MCF 10A (cell line): ENCODE measurements at regions of chr9 and their contacts with region 1.

Region 1: GRCh38 chr9:83980395-83981125 is at the start of gene RMI1:
- DNase-seq: peak; percentile 99
- H3K4me3 Mint-ChIP-seq: peak within 1 kb of the TSS; percentile 100
- H3K27ac Mint-ChIP-seq: peak within 1 kb of the TSS; percentile 100
- H3K4me1 Mint-ChIP-seq: peaks cover 25% of the 10 kb centered on the region
- H3K27me3 Mint-ChIP-seq: no peaks in the 10 kb centered on the region
- CTCF ChIP-seq: no peak
- total RNA-seq, gene RMI1: 6.9 and 11.0 TPM in 2 replicates

Region 2: DNA sequence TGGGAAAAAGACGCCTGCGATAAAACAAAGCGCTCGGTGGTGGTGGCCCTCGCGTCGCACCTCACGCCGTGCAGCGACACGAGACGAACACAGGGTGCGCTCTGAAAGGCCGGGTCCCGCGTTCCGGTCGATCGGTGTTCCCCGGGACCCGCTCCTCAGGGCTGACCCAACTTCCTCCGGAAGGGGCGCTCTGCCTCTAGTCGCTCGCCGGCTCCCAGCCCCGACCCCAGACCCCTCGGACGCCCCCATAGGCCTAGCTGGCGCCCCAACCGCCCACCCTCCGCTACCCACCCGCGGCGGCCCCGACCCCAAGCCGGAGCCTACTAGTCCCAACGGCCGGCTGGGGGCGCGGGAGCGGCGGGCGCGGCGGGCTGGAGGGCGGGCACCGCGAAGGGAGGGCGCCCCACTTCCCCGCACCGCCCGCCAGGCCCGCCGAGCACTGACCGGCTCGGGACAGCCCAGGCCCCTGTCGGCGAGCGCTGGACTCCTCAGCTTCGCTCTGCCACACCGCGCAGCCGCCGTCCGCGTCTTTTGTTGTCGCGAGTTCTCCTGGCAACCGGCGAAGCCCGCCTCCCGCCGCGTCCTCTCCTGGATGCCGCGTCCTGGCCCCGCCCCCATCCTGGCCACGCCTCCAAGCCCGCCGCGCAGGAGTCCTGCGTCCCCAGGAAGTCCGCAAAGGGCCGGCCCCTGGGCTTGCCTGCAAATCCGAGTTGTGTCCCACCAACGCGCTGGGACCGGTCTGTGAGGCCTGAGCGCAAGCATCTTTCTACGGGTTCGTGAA is 59.4 kb before region 1 on chr9 and contains the start of gene KIF27:
- CTCF ChIA-PET with region 1: interaction called, 6 read pairs
- POLR2A ChIA-PET with region 1: interaction called, 28 read pairs
- intact Hi-C with region 1: loop called (anchors 2 kb)
- DNase-seq: peak; percentile 96
- H3K4me3 Mint-ChIP-seq: peak within 1 kb of the TSS; percentile 77
- H3K27ac Mint-ChIP-seq: peak within 1 kb of the TSS; percentile 92
- H3K4me1 Mint-ChIP-seq: peaks cover 10% of the 10 kb centered on the region
- H3K27me3 Mint-ChIP-seq: no peaks in the 10 kb centered on the region
- CTCF ChIP-seq: peak; percentile 11
- total RNA-seq, gene KIF27: 9.4 and 10.0 TPM in 2 replicates

Region 3: GRCh38 chr9:83965350-83966208 is 15.0 kb before region 1 on chr9:
- CTCF ChIA-PET with region 1: interaction called, 5 read pairs
- POLR2A ChIA-PET with region 1: interaction called, 104 read pairs
- intact Hi-C with region 1: no loop called
- DNase-seq: peak; percentile 34
- H3K4me3 Mint-ChIP-seq: no peak overlapping the region
- H3K27ac Mint-ChIP-seq: no peak overlapping the region
- H3K4me1 Mint-ChIP-seq: peaks cover 24% of the 10 kb centered on the region
- H3K27me3 Mint-ChIP-seq: no peaks in the 10 kb centered on the region
- CTCF ChIP-seq: no peak

Region 4: DNA sequence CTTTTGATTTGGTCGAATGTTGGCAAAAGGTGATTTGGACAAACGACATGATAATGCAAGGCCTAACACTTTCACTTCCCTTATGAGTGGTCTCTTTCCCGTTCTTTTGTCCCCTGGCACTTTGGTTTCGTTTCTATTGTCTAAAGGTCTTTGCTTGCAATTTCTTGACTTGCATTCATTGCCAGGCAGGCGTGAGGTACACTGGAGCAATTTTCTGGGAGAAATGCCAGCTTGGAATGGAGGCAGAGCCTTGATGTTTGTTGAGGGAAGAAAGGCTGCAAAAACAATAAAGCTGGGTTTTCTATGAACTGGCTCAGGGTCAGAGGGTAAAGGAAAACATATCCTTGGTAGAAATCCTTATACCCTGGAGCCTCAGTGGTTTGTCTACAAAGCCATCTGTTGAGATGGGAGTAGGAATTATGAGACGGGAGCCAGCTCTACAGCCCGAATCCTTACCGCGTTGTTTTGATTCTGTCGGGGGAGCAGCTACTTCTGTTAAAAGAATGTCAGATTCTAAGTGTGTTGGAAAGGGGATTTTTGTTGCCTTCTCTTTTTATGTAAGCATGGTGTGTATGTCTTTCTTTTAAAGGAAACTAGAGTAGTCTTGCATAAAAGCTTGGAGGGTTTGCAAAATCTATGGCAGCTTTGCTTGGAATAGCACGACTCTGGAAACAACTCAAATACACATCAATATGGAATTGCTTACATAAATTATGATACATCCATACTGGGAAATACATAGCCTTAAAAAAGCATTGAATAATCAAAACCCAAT is 158.9 kb after region 1 on chr9:
- CTCF ChIA-PET with region 1: interaction called, 6 read pairs
- POLR2A ChIA-PET with region 1: interaction called, 130 read pairs
- intact Hi-C with region 1: loop called (anchors 2 kb)
- DNase-seq: peak; percentile 90
- H3K4me3 Mint-ChIP-seq: peak overlapping the region; percentile 67
- H3K27ac Mint-ChIP-seq: peak overlapping the region; percentile 88
- H3K4me1 Mint-ChIP-seq: peaks cover 29% of the 10 kb centered on the region
- H3K27me3 Mint-ChIP-seq: no peaks in the 10 kb centered on the region
- CTCF ChIP-seq: no peak

Region 5: DNA sequence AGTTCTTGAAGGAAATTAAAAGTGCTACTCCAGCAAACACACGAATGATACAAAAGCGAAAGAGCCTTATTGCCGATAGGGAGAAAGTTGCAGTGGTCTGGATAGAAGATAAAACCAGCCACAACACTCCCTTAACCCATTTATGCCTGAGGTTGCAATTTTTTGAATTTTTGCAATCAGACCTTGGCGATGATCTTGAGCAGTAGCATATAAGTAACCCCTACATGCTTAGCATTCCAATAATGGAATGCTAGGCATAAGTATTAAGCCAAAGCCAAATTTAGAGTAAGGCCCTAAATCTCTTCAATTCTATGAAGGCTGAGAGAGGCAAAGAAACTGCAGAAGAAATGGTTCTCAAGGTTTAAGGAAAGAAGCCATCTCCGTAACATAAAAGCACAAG is 206.5 kb after region 1 on chr9:
- CTCF ChIA-PET with region 1: no interaction called
- POLR2A ChIA-PET with region 1: interaction called, 12 read pairs
- intact Hi-C with region 1: no loop called
- DNase-seq: no peak
- H3K4me3 Mint-ChIP-seq: no peak overlapping the region
- H3K27ac Mint-ChIP-seq: no peak overlapping the region
- H3K4me1 Mint-ChIP-seq: peaks cover 4% of the 10 kb centered on the region
- H3K27me3 Mint-ChIP-seq: no peaks in the 10 kb centered on the region
- CTCF ChIP-seq: no peak

Region 6: GRCh38 chr9:84261082-84261746 is 280.7 kb after region 1 on chr9:
- CTCF ChIA-PET with region 1: interaction called, 14 read pairs
- POLR2A ChIA-PET with region 1: interaction called, 19 read pairs
- intact Hi-C with region 1: loop called (anchors 1 kb)
- DNase-seq: peak; percentile 82
- H3K4me3 Mint-ChIP-seq: no peak overlapping the region
- H3K27ac Mint-ChIP-seq: no peak overlapping the region
- H3K4me1 Mint-ChIP-seq: peaks cover 11% of the 10 kb centered on the region
- H3K27me3 Mint-ChIP-seq: no peaks in the 10 kb centered on the region
- CTCF ChIP-seq: peak; percentile 79

Region 7: GRCh38 chr9:84748112-84748511 is 767.6 kb after region 1 on chr9:
- CTCF ChIA-PET with region 1: no interaction called
- POLR2A ChIA-PET with region 1: no interaction called
- intact Hi-C with region 1: no loop called
- DNase-seq: no peak
- H3K4me3 Mint-ChIP-seq: no peak overlapping the region
- H3K27ac Mint-ChIP-seq: no peak overlapping the region
- H3K4me1 Mint-ChIP-seq: peaks cover 28% of the 10 kb centered on the region
- H3K27me3 Mint-ChIP-seq: no peaks in the 10 kb centered on the region
- CTCF ChIP-seq: no peak